GM10248 (cell line): ENCODE measurements at regions of chr6 and their contacts with region 1.

Region 1: GRCh38 chr6:145406508-145407182 is 328.7 kb downstream of the EPM2A start:
- DNase-seq: no peak
- CTCF ChIP-seq: no peak

Region 2: DNA sequence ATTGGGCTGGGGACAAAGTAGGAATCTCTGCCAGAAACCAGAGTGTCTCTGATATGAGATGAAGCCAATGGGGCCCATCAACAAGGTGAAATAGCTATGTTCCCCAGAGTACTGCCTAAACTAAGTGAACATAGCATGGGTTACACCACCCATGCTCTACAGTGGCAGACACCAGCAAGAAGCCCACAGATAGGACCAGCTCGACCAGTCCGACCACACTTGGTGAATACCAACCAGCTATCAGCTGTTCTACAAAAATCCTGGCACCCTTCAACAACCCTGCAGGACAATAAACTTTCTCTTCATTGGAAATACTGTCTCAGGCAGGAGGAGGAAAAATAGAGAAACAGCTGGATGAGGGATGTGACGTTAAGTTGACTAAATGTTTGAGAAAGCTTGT is 17.3 kb after region 1 on chr6:
- CTCF ChIA-PET with region 1: interaction called, 11 read pairs
- POLR2A ChIA-PET with region 1: no interaction called
- DNase-seq: no peak
- CTCF ChIP-seq: no peak